A549 (cell line): ENCODE measurements at regions of chr1 and their contacts with region 1.

Region 1: GRCh38 chr1:201254625-201255506 is 28.4 kb upstream of the PKP1 start:
- DNase-seq: peak; percentile 47 to 89
- ATAC-seq: peak; percentile 78 to 95
- H3K4me3 ChIP-seq: no peak overlapping the region
- H3K27ac ChIP-seq: peak overlapping the region; percentile 63 to 64; a peak in 5 of 6 replicates
- H3K4me1 ChIP-seq: 0 out of 3 replicates have a peak, but pooled peaks cover 3% of the 10 kb centered on the region
- CTCF ChIP-seq: peak; percentile 98
- EP300 ChIP-seq: no peak
- POLR2A ChIP-seq: no peak
- RAD21 ChIP-seq: peak; percentile 99 to 100

Region 2: DNA sequence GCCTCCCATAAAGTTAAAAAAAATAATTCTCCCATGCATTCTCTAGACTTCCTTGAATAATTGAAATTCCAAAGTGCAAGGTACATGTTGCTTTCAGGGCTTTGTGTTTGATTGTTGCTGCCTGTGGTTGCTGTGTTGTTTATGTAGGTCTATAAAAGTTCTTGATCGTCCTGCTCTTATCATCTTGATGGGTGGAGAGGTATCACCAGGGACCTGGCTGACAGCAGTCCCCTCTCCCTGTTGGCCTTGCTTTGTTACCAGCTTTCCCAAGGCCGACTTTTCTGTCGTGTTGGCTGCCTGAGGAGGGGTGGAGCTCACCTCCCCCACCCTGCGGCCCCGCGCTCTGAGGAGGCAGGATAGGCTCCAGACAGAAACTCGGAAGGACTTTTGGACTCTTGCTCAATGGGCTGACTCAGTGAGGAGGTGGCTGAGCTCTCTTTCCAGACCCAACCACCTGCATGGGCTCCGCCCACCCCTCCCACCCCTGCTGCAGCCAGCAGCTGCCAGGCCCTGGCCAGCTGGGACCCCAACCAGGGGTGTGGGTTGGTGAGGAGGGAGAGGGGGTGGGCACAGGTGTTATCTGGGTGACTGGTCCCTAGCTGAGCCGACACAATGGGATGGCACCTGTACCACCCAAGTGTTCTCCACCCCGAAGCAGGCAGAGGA is 358.2 kb before region 1 on chr1:
- CTCF ChIA-PET with region 1: no interaction called
- POLR2A ChIA-PET with region 1: no interaction called
- DNase-seq: peak; percentile 93 to 98
- ATAC-seq: peak; percentile 73 to 78
- H3K4me3 ChIP-seq: peak overlapping the region; percentile 68
- H3K27ac ChIP-seq: peak overlapping the region; percentile 100
- H3K4me1 ChIP-seq: peaks cover 77% of the 10 kb centered on the region
- CTCF ChIP-seq: no peak
- EP300 ChIP-seq: peak; percentile 86 to 91; a peak in 3 of 5 replicates
- POLR2A ChIP-seq: peak; percentile 41; the same call in 1 of the 2 replicates
- RAD21 ChIP-seq: peak in 1 of 2 experiments; percentile 41; a peak in 1 of 5 replicates

Region 3: GRCh38 chr1:200907611-200908097 is 347.2 kb before region 1 on chr1:
- CTCF ChIA-PET with region 1: no interaction called
- POLR2A ChIA-PET with region 1: no interaction called
- DNase-seq: peak in 1 of 2 experiments; percentile 79
- ATAC-seq: peak; percentile 82 to 91
- H3K4me3 ChIP-seq: no peak overlapping the region
- H3K27ac ChIP-seq: peak overlapping the region; percentile 77 to 82
- H3K4me1 ChIP-seq: peaks cover 76% of the 10 kb centered on the region
- CTCF ChIP-seq: no peak
- EP300 ChIP-seq: peak in 1 of 2 experiments; percentile 48; a peak in 1 of 5 replicates
- POLR2A ChIP-seq: no peak
- RAD21 ChIP-seq: no peak; a peak in 2 of 5 replicates

Region 4: GRCh38 chr1:201268604-201269151 is 13.8 kb after region 1 on chr1:
- CTCF ChIA-PET with region 1: interaction called, 79 read pairs
- POLR2A ChIA-PET with region 1: no interaction called
- DNase-seq: peak; percentile 54 to 87
- ATAC-seq: peak; percentile 73 to 84
- H3K4me3 ChIP-seq: no peak overlapping the region
- H3K27ac ChIP-seq: peak overlapping the region; percentile 73 to 90
- H3K4me1 ChIP-seq: peaks cover 48% of the 10 kb centered on the region
- CTCF ChIP-seq: no peak
- EP300 ChIP-seq: no peak
- POLR2A ChIP-seq: no peak
- RAD21 ChIP-seq: no peak

Region 5: DNA sequence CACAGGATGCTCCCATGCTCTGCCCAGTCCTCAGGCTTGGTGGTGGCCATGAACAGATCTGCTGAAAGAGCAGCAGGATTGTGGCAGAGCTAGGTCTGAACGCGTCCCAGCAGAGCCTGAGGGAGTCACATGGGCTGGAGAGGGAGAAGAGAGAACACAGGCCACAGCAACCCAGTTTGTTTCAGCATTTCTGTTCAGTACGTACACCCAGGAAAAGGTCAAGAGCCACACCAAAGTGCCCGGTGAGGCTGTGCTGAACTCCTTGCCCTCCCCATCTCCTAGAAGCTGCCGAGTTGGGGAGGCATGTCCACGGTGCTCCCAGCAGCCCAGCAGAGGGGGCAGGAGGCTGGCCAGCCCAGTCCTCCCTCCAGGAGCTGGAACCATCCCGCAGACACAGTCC is 33.9 kb after region 1 on chr1:
- CTCF ChIA-PET with region 1: interaction called, 19 read pairs
- POLR2A ChIA-PET with region 1: no interaction called
- DNase-seq: no peak
- ATAC-seq: no peak; a peak in 1 of 6 replicates
- H3K4me3 ChIP-seq: no peak overlapping the region
- H3K27ac ChIP-seq: 0 out of 6 replicates have a peak overlapping the region, but pooled peaks of 1 of the 2 experiments have one; percentile 5
- H3K4me1 ChIP-seq: no peaks in the 10 kb centered on the region
- CTCF ChIP-seq: no peak
- EP300 ChIP-seq: no peak
- POLR2A ChIP-seq: no peak
- RAD21 ChIP-seq: no peak

Region 6: DNA sequence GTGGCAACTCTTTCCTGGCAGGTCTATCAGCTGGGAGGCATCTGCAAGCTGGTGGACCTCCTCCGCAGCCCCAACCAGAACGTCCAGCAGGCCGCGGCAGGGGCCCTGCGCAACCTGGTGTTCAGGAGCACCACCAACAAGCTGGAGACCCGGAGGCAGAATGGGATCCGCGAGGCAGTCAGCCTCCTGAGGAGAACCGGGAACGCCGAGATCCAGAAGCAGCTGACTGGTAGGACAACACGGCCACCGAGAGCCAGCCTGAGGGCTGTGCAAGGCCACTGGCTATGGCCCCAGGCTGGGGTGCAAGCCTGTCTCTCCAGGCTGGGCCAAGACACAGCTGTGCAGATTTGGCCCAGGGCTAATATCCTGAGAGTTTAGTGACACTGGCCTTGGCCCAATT is 62.7 kb after region 1 on chr1:
- CTCF ChIA-PET with region 1: interaction called, 32 read pairs
- POLR2A ChIA-PET with region 1: no interaction called
- DNase-seq: no peak
- ATAC-seq: no peak
- H3K4me3 ChIP-seq: no peak overlapping the region
- H3K27ac ChIP-seq: no peak overlapping the region
- H3K4me1 ChIP-seq: no peaks in the 10 kb centered on the region
- CTCF ChIP-seq: no peak
- EP300 ChIP-seq: no peak
- POLR2A ChIP-seq: no peak
- RAD21 ChIP-seq: no peak

Region 7: GRCh38 chr1:201361652-201362504 is 107.0 kb after region 1 on chr1:
- CTCF ChIA-PET with region 1: interaction called, 480 read pairs
- POLR2A ChIA-PET with region 1: no interaction called
- DNase-seq: peak; percentile 47 to 96
- ATAC-seq: peak; percentile 75 to 91; a peak in 5 of 6 replicates
- H3K4me3 ChIP-seq: no peak overlapping the region
- H3K27ac ChIP-seq: peak overlapping the region in 1 of 2 experiments; percentile 50; a peak in 3 of 6 replicates
- H3K4me1 ChIP-seq: no peaks in the 10 kb centered on the region; the same call in 2 of the 3 replicates
- CTCF ChIP-seq: peak; percentile 91
- EP300 ChIP-seq: no peak
- POLR2A ChIP-seq: no peak
- RAD21 ChIP-seq: peak; percentile 96 to 99

Region 8: GRCh38 chr1:201408176-201408833 is 153.4 kb after region 1 on chr1:
- CTCF ChIA-PET with region 1: interaction called, 46 read pairs
- POLR2A ChIA-PET with region 1: no interaction called
- DNase-seq: peak; percentile 80 to 93
- ATAC-seq: peak; percentile 74 to 91
- H3K4me3 ChIP-seq: no peak overlapping the region
- H3K27ac ChIP-seq: peak overlapping the region; percentile 82 to 92
- H3K4me1 ChIP-seq: peaks cover 57% of the 10 kb centered on the region
- CTCF ChIP-seq: peak; percentile 95
- EP300 ChIP-seq: no peak
- POLR2A ChIP-seq: no peak
- RAD21 ChIP-seq: peak; percentile 88

Region 9: DNA sequence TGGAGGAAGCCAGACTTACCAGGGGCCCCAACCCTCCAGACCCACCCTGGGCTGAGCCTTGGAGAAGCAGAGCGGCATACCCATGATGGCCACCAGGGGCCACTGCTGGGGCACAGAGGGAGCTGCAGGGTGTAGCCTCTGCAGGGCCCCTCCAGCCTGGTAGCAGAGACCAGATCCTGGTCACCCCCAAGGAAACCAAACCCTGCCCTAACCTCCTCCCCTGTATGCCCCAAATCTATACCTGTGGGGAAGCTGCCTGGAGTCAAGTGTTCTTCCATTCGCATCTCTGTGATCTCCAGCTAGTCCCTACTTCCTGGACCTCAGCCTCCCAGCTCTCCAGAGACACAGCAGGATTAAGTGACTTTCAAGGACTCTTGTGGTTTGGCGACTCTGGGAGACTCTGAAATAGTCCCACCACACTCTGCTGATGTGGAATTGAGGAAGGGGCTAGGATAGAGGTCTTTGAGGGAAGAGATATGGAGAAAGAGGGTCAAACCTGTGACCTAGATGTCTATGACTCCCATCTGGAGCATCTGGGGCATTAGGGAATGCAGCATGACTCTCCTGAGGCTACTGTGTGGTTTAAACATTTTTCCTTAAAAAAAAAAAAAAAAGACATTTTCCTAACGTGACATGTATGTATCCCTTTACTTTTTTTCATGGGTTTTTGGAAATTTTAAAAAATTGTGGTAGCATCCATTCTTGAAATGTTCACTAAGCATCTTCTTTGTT is 454.9 kb after region 1 on chr1:
- CTCF ChIA-PET with region 1: no interaction called
- POLR2A ChIA-PET with region 1: no interaction called
- DNase-seq: peak; percentile 54 to 82
- ATAC-seq: peak; percentile 62 to 80; a peak in 4 of 6 replicates
- H3K4me3 ChIP-seq: no peak overlapping the region
- H3K27ac ChIP-seq: peak overlapping the region; percentile 59 to 95
- H3K4me1 ChIP-seq: peaks cover 43% of the 10 kb centered on the region
- CTCF ChIP-seq: peak; percentile 92
- EP300 ChIP-seq: no peak
- POLR2A ChIP-seq: no peak
- RAD21 ChIP-seq: peak; percentile 95 to 97